CD14-positive monocyte (primary cell): ENCODE measurements at regions of chr9 and their contacts with region 1.

Region 1: DNA sequence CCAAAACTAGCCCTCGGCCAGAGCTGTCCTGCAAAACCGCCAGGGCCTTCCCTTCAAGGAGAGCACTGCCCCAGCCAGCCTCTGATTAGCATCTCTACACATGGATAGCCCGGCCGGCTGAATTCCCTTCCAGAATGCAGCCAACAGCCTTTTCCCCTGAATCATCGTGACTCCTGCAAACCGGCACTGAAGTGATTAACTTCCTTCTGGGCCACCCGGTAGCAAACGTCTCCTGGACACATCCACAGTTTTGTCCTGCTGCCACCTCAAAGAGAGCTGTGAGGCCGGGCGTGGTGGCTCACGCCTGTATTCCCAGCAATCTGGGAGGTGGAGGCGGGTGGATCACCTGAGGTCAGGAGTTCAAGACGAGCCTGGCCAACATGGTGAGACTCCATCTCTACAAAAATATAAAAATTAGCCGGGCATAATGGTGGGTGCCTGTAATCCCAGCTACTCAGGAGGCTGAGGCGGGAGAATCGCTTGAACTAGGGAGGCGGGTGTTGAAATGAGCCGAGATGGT is 21.1 kb upstream of the EEIG1 start:
- DNase-seq: peak in 1 of 3 donors; percentile 42
- H3K4me3 ChIP-seq: no peak overlapping the region
- H3K4me3 Mint-ChIP-seq: no peak overlapping the region
- H3K27ac ChIP-seq: no peak overlapping the region
- H3K27ac Mint-ChIP-seq: no peak overlapping the region
- H3K4me1 ChIP-seq: peaks cover 17 to 20% of the 10 kb centered on the region in 2 donors
- H3K4me1 Mint-ChIP-seq: peaks cover 18% of the 10 kb centered on the region
- H3K27me3 ChIP-seq: peaks cover 0 to 3% of the 10 kb centered on the region in 2 donors
- H3K27me3 Mint-ChIP-seq: peaks cover 4 to 25% (median 23%) of the 10 kb centered on the region in 3 donors
- CTCF ChIP-seq: no peak

Region 2: GRCh38 chr9:128043467-128043868 is 41.6 kb after region 1 on chr9:
- intact Hi-C with region 1: loop called in 1 of 2 experiments (anchors 5 kb)
- DNase-seq: no peak
- H3K4me3 ChIP-seq: no peak overlapping the region
- H3K4me3 Mint-ChIP-seq: no peak overlapping the region
- H3K27ac ChIP-seq: no peak overlapping the region
- H3K27ac Mint-ChIP-seq: no peak overlapping the region
- H3K4me1 ChIP-seq: no peaks in the 10 kb centered on the region
- H3K4me1 Mint-ChIP-seq: peaks cover 2% of the 10 kb centered on the region
- H3K27me3 ChIP-seq: no peaks in the 10 kb centered on the region
- H3K27me3 Mint-ChIP-seq: peaks cover 1 to 2% (median 1%) of the 10 kb centered on the region in 3 donors
- CTCF ChIP-seq: no peak